ENCODE measurements at regions of chr3 and their contacts with region 1.

Region 1: DNA sequence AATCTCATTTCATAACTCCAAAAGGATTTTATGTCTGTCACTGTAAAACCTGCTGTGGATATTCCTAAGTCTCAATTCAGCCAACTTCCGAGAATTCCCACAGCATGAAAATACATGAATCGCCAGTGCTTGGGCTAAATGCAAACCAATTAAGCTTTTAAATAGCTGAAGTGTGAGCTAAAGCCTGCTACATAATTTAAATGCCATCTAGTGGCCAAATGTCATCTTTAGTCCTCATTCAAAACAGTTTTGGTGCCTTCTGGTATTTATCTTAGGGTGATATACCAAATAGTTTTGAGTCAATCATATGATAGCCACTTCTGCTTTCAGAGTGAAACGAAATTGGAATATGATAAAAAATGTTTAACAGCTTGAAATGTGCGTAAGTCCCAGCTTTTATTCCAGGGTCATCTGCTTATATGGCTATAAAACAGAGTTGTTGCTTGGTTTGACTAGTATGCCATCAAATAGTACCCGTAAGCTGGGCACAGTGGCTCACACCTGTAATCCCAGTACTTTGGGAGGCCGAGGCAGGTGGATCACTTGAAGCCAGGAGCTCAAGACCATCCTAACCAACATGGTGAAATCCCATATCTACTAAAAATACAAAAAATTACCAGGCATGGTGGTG is 41.8 kb upstream of the CCNL1 start:
- DNase-seq: peak; percentile 52
- H3K4me3 Mint-ChIP-seq: no peak overlapping the region
- H3K27ac Mint-ChIP-seq: no peak overlapping the region
- H3K4me1 Mint-ChIP-seq: no peaks in the 10 kb centered on the region
- H3K27me3 Mint-ChIP-seq: no peaks in the 10 kb centered on the region
- CTCF ChIP-seq: peak; percentile 45

Region 2: GRCh38 chr3:155995525-155996351 is 1206.0 kb before region 1 on chr3:
- CTCF ChIA-PET with region 1: interaction called, 6 read pairs
- POLR2A ChIA-PET with region 1: no interaction called
- intact Hi-C with region 1: loop called (anchors 5 kb)
- DNase-seq: peak; percentile 59
- H3K4me3 Mint-ChIP-seq: no peak overlapping the region
- H3K27ac Mint-ChIP-seq: no peak overlapping the region
- H3K4me1 Mint-ChIP-seq: no peaks in the 10 kb centered on the region
- H3K27me3 Mint-ChIP-seq: peaks cover 7% of the 10 kb centered on the region
- CTCF ChIP-seq: peak; percentile 40

Region 3: GRCh38 chr3:156685198-156685597 is 516.6 kb before region 1 on chr3:
- CTCF ChIA-PET with region 1: no interaction called
- POLR2A ChIA-PET with region 1: no interaction called
- intact Hi-C with region 1: no loop called
- DNase-seq: peak; percentile 42
- H3K4me3 Mint-ChIP-seq: peak overlapping the region; percentile 59
- H3K27ac Mint-ChIP-seq: peak overlapping the region; percentile 87
- H3K4me1 Mint-ChIP-seq: peaks cover 54% of the 10 kb centered on the region
- H3K27me3 Mint-ChIP-seq: no peaks in the 10 kb centered on the region
- CTCF ChIP-seq: no peak

Region 4: GRCh38 chr3:157088601-157089454 is 112.9 kb before region 1 on chr3:
- CTCF ChIA-PET with region 1: no interaction called
- POLR2A ChIA-PET with region 1: no interaction called
- intact Hi-C with region 1: no loop called
- DNase-seq: peak; percentile 87
- H3K4me3 Mint-ChIP-seq: peak overlapping the region; percentile 77
- H3K27ac Mint-ChIP-seq: peak overlapping the region; percentile 79
- H3K4me1 Mint-ChIP-seq: peaks cover 28% of the 10 kb centered on the region
- H3K27me3 Mint-ChIP-seq: no peaks in the 10 kb centered on the region
- CTCF ChIP-seq: no peak

Region 5: DNA sequence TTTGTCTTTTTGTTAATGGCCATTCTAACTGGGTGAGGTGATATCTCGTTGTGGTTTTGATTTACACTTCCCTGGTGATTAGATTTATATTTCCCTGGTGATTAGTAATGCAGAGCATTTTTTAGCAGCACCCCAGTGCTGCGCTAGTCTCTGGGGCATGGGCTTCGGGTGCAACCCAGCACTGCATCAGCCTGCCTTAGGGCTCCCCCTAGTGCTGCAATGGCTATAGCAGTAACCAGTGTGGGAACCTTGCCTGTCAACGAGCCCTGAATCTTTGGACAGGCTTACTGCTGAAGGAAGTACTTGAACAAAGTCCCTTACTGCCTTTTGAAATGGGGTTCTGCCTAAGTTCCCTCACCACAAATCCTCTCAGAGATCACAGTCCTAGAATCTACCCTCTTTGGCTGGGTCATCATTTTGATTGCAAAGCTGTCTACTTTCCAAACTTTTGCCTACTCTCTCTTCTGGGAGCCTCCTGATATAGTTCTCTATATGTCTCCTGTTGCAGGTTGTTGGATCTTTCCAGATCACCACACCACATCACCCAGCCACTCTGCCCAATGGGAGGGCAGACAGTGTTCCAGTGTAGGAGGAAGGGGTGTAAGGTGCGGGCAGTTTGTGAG is 37.4 kb after region 1 on chr3:
- CTCF ChIA-PET with region 1: interaction called, 8 read pairs
- POLR2A ChIA-PET with region 1: no interaction called
- intact Hi-C with region 1: loop called (anchors 2 kb)
- DNase-seq: peak; percentile 73
- H3K4me3 Mint-ChIP-seq: no peak overlapping the region
- H3K27ac Mint-ChIP-seq: no peak overlapping the region
- H3K4me1 Mint-ChIP-seq: peaks cover 5% of the 10 kb centered on the region
- H3K27me3 Mint-ChIP-seq: no peaks in the 10 kb centered on the region
- CTCF ChIP-seq: peak; percentile 62

Region 6: DNA sequence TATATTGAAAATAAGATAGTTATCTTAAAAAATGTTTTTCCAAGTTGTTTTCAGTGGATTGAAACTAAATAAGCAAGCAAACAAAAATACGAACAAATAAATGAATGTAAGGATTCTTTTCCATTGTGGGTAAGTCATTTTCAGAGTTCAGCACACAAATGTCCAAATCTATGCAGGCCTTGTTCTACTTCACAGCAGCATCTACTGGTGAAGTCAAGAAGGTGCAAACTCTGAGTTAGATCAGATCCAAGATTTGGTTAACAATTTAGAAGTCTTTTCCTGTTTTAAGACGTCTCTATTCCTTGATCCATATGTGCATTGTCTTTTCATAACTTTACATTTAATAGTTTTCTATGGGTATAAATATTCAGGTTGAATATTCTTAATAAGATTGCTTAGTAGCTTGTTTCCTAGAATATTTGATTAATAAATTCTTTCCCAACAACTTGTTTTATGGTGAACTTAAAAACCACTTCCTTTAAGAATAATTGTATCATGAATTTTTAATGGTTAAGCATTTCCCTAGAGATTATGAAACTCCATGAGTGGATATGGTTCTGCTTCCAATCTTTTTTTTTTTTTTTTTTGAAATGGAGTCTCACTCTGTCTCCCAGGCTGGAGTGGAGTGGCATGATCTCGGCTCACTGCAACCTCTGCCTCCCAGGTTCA is 245.4 kb after region 1 on chr3:
- CTCF ChIA-PET with region 1: interaction called, 88 read pairs
- POLR2A ChIA-PET with region 1: interaction called, 6 read pairs
- intact Hi-C with region 1: loop called (anchors 1 kb)
- DNase-seq: peak; percentile 53
- H3K4me3 Mint-ChIP-seq: no peak overlapping the region
- H3K27ac Mint-ChIP-seq: no peak overlapping the region
- H3K4me1 Mint-ChIP-seq: peaks cover 17% of the 10 kb centered on the region
- H3K27me3 Mint-ChIP-seq: no peaks in the 10 kb centered on the region
- CTCF ChIP-seq: peak; percentile 65

Region 7: DNA sequence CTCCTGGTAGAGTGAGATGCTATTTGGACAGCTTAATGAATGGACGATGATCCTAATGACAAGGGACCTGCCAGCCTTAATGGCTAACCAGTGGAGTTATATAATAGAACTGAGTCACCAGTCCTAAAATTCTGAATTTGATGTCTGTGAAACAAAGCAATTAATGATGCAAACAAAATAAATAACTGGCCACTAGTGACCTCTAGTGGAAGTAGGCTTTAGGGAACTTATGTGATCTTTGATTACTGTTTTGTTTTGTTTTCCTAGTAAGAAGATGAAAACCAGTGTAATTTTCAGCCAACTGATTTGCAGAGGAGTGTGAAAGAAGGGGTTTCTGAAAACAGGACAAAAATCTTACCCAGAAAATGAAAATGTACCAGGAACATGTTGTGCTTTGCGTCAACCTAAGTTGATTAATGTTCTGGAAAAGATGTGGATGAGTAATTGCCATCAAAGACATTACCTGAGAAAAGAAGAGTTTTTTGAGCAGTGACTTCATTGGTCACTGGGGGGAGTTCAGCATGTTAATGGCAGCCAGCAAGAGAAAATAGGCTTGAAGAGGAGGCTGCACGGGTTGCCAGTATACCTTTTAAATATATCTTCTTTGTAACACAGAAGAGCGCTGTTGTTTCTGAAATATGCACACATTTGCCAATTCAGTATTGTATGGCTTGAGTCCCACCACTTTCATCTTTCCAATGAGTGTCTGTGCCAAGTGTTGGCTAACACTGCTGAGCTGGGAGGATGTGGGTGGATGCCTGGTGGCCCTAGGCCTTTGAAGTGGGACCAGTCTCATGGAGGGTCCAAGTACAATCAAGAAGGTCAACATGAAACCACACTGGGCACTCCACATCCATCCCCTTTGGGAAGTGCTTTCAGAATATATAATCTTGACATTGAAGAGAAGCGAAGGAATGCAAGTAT is 292.1 kb after region 1 on chr3:
- CTCF ChIA-PET with region 1: interaction called, 282 read pairs
- POLR2A ChIA-PET with region 1: interaction called, 4 read pairs
- intact Hi-C with region 1: loop called (anchors 1 kb)
- DNase-seq: peak; percentile 70
- H3K4me3 Mint-ChIP-seq: no peak overlapping the region
- H3K27ac Mint-ChIP-seq: no peak overlapping the region
- H3K4me1 Mint-ChIP-seq: peaks cover 13% of the 10 kb centered on the region
- H3K27me3 Mint-ChIP-seq: no peaks in the 10 kb centered on the region
- CTCF ChIP-seq: peak; percentile 59